MCF 10A (cell line): ENCODE measurements at regions of chr11 and their contacts with region 1.

Region 1: GRCh38 chr11:64225612-64226506 is at the starts of genes NUDT22 and TRPT1:
- DNase-seq: peak; percentile 79
- H3K4me3 Mint-ChIP-seq: peak within 1 kb of the TSS; percentile 80
- H3K27ac Mint-ChIP-seq: peak within 1 kb of the TSS; percentile 80
- H3K4me1 Mint-ChIP-seq: peaks cover 8% of the 10 kb centered on the region
- H3K27me3 Mint-ChIP-seq: no peaks in the 10 kb centered on the region
- CTCF ChIP-seq: peak; percentile 31
- total RNA-seq, gene NUDT22: 51.0 and 73.6 TPM in 2 replicates
- total RNA-seq, gene TRPT1: 27.0 and 31.3 TPM in 2 replicates

Region 2: GRCh38 chr11:64185816-64186498 is 39.9 kb before region 1 on chr11 and contains the start of gene STIP1:
- CTCF ChIA-PET with region 1: interaction called, 3 read pairs
- POLR2A ChIA-PET with region 1: interaction called, 20 read pairs
- intact Hi-C with region 1: loop called (anchors 2 kb)
- DNase-seq: peak; percentile 100
- H3K4me3 Mint-ChIP-seq: no peak within 1 kb of the TSS
- H3K27ac Mint-ChIP-seq: no peak within 1 kb of the TSS
- H3K4me1 Mint-ChIP-seq: peaks cover 7% of the 10 kb centered on the region
- H3K27me3 Mint-ChIP-seq: no peaks in the 10 kb centered on the region
- CTCF ChIP-seq: peak; percentile 23
- total RNA-seq, gene STIP1: 161 and 171 TPM in 2 replicates

Region 3: GRCh38 chr11:64204464-64204989 is 21.3 kb before region 1 on chr11:
- CTCF ChIA-PET with region 1: interaction called, 22 read pairs
- POLR2A ChIA-PET with region 1: interaction called, 4 read pairs
- intact Hi-C with region 1: no loop called
- DNase-seq: peak; percentile 96
- H3K4me3 Mint-ChIP-seq: no peak overlapping the region
- H3K27ac Mint-ChIP-seq: peak overlapping the region; percentile 37
- H3K4me1 Mint-ChIP-seq: peaks cover 12% of the 10 kb centered on the region
- H3K27me3 Mint-ChIP-seq: no peaks in the 10 kb centered on the region
- CTCF ChIP-seq: peak; percentile 83

Region 4: DNA sequence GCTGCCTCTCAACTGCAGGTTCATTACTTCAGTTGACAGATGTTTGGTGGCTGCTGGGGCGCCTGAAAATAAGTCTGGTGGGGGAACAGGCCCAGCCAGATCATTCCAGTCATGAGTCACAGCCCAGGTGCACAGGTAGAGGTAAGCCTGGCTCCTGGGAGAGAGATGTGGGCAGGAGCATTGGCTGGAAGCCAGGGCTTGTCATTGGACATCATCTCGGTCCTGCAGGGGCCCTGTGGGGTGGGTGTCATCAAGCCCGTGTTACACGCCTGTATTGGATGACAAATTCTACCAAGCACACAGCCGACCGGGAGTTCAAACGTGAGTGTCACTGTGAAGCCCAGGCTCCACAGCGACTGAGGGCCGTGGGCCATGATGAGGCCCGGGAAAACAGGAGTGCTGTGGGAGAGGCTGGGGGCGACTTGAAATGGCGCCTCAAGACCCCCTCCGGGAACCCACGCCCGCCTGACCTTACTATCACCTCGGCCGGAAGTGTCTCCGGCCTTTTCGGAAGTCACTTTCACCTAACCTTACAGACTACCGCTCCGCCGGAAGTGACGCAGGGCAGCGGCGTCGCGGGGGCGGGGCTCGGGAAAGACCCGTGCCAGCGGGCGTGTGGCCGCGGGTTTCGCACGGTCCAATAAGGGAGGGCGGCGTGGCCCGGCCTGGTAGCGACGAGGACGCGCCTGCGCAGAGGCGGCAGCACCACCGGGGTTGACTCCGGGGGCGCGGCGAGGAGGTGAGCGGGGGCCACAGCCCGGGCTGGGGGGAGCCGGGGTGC is 14.7 kb after region 1 on chr11 and contains the start of gene FKBP2:
- CTCF ChIA-PET with region 1: interaction called, 3 read pairs
- POLR2A ChIA-PET with region 1: interaction called, 122 read pairs
- intact Hi-C with region 1: no loop called
- DNase-seq: peak; percentile 96
- H3K4me3 Mint-ChIP-seq: peak within 1 kb of the TSS; percentile 93
- H3K27ac Mint-ChIP-seq: peak within 1 kb of the TSS; percentile 98
- H3K4me1 Mint-ChIP-seq: peaks cover 19% of the 10 kb centered on the region
- H3K27me3 Mint-ChIP-seq: no peaks in the 10 kb centered on the region
- CTCF ChIP-seq: no peak
- total RNA-seq, gene FKBP2: 84.7 and 86.0 TPM in 2 replicates

Region 5: DNA sequence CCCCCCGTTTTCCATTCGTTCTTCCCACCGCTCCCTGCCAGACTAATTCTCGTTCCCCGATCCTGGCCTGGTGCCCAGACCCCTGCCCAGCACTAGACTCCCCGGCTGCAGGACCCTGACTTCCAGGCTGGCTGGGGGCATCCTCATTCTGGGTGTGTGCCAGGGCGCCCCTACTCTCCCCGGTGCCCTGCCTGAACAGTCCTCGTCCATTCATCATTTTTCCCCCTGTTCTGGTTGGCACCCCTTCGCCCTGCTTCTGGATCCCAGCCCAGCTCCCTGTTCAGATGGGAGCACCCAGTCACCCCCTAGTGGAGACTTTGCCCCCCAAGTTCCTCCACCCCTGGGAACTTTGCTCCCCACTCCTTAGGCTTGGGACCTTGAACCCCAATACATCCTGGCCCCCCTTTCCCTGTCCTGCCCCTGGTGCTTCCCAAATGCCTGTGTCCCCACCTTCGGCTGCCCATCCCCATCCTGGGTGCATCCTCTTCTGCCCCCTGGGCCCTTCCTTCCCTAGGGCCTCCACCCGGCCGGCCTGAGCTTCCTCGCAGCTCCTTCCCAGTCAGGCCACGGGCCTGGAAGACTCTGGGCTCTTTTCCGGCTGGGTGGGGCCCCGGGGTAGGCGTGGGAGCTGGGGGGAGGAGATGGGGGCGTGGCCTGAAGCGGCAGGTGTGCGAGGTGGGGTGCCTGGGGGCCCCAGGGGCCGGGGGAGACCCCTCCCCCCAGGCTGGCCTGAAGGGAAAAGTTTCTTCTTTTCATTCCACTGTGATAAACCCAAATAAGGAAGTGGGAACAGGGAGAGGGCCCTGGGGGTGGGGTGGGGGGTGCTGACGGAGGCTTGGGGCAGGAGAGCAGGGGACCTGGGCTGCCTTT is 26.4 kb after region 1 on chr11:
- CTCF ChIA-PET with region 1: interaction called, 13 read pairs
- POLR2A ChIA-PET with region 1: interaction called, 122 read pairs
- intact Hi-C with region 1: no loop called
- DNase-seq: peak; percentile 69
- H3K4me3 Mint-ChIP-seq: peak overlapping the region; percentile 87
- H3K27ac Mint-ChIP-seq: peak overlapping the region; percentile 89
- H3K4me1 Mint-ChIP-seq: peaks cover 6% of the 10 kb centered on the region
- H3K27me3 Mint-ChIP-seq: no peaks in the 10 kb centered on the region
- CTCF ChIP-seq: no peak

Region 6: GRCh38 chr11:64291752-64292459 is 66.0 kb after region 1 on chr11:
- CTCF ChIA-PET with region 1: no interaction called
- POLR2A ChIA-PET with region 1: no interaction called
- intact Hi-C with region 1: no loop called
- DNase-seq: no peak
- H3K4me3 Mint-ChIP-seq: no peak overlapping the region
- H3K27ac Mint-ChIP-seq: no peak overlapping the region
- H3K4me1 Mint-ChIP-seq: peaks cover 11% of the 10 kb centered on the region
- H3K27me3 Mint-ChIP-seq: peaks cover 11% of the 10 kb centered on the region
- CTCF ChIP-seq: no peak